Endothelial cell of umbilical vein (primary cell): ENCODE measurements at regions of chr1 and their contacts with region 1.

Region 1: GRCh38 chr1:81887421-81888144 is 86.8 kb downstream of the ADGRL2 start:
- DNase-seq: peak; percentile 84
- H3K4me3 ChIP-seq: no peak overlapping the region
- H3K27ac ChIP-seq: peak overlapping the region; percentile 69
- H3K4me1 ChIP-seq: peaks cover 17% of the 10 kb centered on the region
- H3K27me3 ChIP-seq: no peaks in the 10 kb centered on the region
- CTCF ChIP-seq: no peak
- POLR2A ChIP-seq: no peak

Region 2: GRCh38 chr1:81827938-81828337 is 59.6 kb before region 1 on chr1:
- CTCF ChIA-PET with region 1: no interaction called
- POLR2A ChIA-PET with region 1: no interaction called
- dilution Hi-C with region 1: no loop called
- intact Hi-C with region 1: no loop called
- DNase-seq: no peak
- H3K4me3 ChIP-seq: no peak overlapping the region
- H3K27ac ChIP-seq: no peak overlapping the region
- H3K4me1 ChIP-seq: no peaks in the 10 kb centered on the region
- H3K27me3 ChIP-seq: no peaks in the 10 kb centered on the region
- CTCF ChIP-seq: no peak
- POLR2A ChIP-seq: no peak

Region 3: DNA sequence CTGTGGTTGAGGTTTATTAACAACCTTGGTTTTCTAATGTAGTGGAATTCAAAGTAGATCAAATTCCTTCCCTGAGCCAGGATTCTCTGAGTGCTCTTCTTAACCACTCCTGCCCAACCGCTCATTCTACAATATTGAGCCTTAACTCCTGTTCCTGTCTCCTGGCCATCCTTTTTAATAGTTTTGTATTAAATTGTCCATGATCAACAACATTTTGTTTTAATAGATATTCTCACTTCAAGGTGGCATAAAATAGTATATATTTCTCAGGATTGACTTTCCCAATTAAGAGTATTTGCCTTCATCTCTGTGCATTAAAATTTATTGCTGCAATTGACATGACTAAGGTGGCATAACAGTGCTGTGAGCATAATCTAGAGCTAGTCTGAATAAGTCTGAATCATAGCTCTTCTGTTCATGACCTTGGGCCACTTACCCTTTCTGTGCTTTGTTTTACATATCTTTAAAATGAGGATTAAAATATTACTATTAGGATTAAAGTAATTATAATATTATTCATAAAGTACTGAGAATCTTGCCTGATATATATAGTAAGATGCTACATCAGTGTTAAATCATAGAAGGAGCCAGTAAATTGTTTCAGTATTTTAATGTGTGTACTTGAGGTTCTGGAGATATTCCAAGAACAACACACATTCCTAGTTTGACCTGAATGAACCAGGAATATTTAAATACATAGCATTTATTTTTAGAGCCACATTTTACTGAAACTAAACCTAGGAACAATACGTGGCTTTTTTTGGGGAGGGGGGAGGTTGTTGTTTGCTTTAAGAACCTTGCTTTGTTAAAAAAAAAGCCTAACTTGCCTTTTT is 10.5 kb before region 1 on chr1:
- CTCF ChIA-PET with region 1: interaction called, 15 read pairs
- POLR2A ChIA-PET with region 1: interaction called, 3 read pairs
- dilution Hi-C with region 1: no loop called
- intact Hi-C with region 1: no loop called
- DNase-seq: peak; percentile 83
- H3K4me3 ChIP-seq: no peak overlapping the region
- H3K27ac ChIP-seq: peak overlapping the region; percentile 58
- H3K4me1 ChIP-seq: peaks cover 34% of the 10 kb centered on the region
- H3K27me3 ChIP-seq: no peaks in the 10 kb centered on the region
- CTCF ChIP-seq: no peak
- POLR2A ChIP-seq: no peak

Region 4: DNA sequence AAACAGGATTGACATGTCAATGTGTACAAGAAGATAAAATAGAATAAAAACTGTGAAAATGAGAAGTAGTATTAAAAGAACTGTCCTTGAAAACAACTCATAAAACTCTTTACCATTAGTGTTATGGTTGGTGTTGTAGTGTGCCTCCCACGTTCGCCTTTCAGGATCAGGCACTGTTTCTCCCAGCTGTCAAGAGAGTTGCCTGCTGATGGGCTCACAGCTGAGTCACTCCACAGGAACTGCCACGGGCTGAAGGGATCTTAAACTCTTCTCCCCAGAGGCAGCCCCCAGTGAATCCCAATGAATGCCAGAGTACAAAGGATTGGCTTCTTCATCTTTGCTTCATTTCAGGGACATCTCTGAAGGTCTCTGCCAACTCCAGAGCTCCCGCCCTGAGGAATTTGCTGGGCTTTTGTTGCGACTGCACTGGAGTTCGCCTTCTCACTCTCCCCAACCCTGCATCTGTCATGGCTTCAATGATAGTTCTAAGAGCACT is 32.7 kb after region 1 on chr1:
- CTCF ChIA-PET with region 1: interaction called, 4 read pairs
- POLR2A ChIA-PET with region 1: no interaction called
- dilution Hi-C with region 1: no loop called
- intact Hi-C with region 1: loop called (anchors 5 kb)
- DNase-seq: no peak
- H3K4me3 ChIP-seq: no peak overlapping the region
- H3K27ac ChIP-seq: no peak overlapping the region
- H3K4me1 ChIP-seq: peaks cover 5% of the 10 kb centered on the region
- H3K27me3 ChIP-seq: no peaks in the 10 kb centered on the region
- CTCF ChIP-seq: no peak
- POLR2A ChIP-seq: no peak